Transverse colon (tissue), 4 donors: ENCODE measurements at regions of chr20 and their contacts with region 1.

Region 1: GRCh38 chr20:23350196-23350903 is at the start of gene NXT1:
- DNase-seq: peak; percentile 98
- H3K4me3 ChIP-seq: peak within 1 kb of the TSS; percentile 72 to 98 (median 84)
- H3K27ac ChIP-seq: peak within 1 kb of the TSS; percentile 98 to 100 (median 99)
- H3K4me1 ChIP-seq: peaks cover 16 to 30% (median 18%) of the 10 kb centered on the region in 4 donors
- H3K27me3 ChIP-seq: no peaks in the 10 kb centered on the region
- CTCF ChIP-seq: no peak
- EP300 ChIP-seq: no peak
- POLR2A ChIP-seq: peak; percentile 86
- total RNA-seq, gene NXT1: 16.5 to 43.4 (median 22.8) TPM

Region 2: GRCh38 chr20:21956591-21956990 is 1393.8 kb before region 1 on chr20:
- in situ Hi-C with region 1: no loop called
- intact Hi-C with region 1: no loop called
- DNase-seq: no peak
- H3K4me3 ChIP-seq: no peak overlapping the region
- H3K27ac ChIP-seq: no peak overlapping the region
- H3K4me1 ChIP-seq: no peaks in the 10 kb centered on the region
- H3K27me3 ChIP-seq: no peaks in the 10 kb centered on the region
- CTCF ChIP-seq: no peak
- EP300 ChIP-seq: no peak
- POLR2A ChIP-seq: no peak

Region 3: DNA sequence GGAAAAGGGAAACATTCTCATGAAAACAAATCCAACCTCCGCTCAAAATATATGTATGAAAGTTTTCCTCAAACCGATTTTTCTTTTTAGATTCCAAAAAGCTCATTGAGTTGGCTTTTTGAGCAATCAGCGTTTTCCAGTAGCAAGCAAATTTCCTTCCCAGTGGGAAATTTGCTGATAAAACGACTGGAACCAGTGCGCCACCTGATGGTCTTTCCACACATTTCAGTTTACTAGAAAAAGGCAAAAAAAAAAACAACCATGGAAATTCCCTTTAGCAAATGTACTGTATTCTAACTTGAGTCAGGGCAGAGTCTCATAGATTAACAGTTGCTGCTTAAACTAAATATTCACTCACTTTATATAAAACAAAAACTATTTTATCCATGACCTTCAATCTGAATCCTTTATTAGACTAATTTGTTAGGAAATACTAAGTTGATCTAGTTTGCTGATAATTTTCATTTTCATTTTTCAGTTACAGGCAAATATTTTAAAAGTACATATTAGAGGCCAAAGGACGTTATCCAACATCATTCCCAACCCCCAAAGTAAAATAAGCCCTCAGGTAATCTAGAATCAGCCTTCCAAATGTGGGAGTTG is 1037.5 kb before region 1 on chr20:
- in situ Hi-C with region 1: no loop called
- intact Hi-C with region 1: no loop called
- DNase-seq: no peak
- H3K4me3 ChIP-seq: no peak overlapping the region
- H3K27ac ChIP-seq: no peak overlapping the region
- H3K4me1 ChIP-seq: no peaks in the 10 kb centered on the region
- H3K27me3 ChIP-seq: peaks cover 17% of the 10 kb centered on the region
- CTCF ChIP-seq: peak; percentile 48 to 64 (median 54)
- EP300 ChIP-seq: no peak
- POLR2A ChIP-seq: no peak

Region 4: DNA sequence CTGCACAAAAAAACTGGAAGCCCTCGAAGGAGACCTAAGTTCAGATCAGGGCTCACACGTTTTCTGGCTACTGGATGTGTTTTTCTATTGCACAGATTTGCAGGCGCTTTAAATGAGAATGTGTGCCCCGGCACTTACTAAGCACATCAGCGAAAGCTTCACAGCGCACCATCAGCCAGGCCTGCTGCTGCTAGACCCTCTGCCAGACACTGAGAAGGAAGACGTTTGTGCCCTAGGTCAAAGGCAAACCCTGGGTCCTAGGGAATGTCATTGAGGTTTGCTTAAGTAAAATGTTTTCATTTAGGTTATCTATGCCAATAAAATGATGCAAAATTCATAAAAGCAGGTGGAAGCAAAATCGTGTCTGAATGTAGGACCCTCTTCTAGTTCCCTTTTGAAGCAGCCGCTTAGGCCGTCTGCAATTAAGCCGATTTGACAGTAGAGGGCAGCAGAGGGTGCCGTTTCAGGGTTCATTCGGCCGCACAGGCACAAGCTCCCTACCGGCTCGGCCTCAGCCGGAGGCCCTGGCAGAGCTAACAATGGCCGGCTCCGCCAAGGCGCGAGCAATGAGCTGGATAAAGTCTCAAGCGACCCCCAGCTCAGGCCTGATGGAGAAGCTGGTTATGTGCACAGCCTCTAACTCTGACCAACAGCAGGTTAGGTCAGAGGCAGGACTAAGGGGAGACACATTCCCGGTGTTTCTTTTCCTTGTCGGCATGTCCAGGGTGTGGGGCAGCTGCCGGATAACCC is 658.8 kb before region 1 on chr20:
- in situ Hi-C with region 1: loop called in 1 of 4 experiments (anchors 10 kb)
- intact Hi-C with region 1: no loop called
- DNase-seq: peak; percentile 73
- H3K4me3 ChIP-seq: no peak overlapping the region
- H3K27ac ChIP-seq: no peak overlapping the region
- H3K4me1 ChIP-seq: peaks cover 3 to 5% (median 4%) of the 10 kb centered on the region in 4 donors
- H3K27me3 ChIP-seq: no peaks in the 10 kb centered on the region
- CTCF ChIP-seq: peak; percentile 87 to 89 (median 88)
- EP300 ChIP-seq: no peak
- POLR2A ChIP-seq: no peak

Region 5: DNA sequence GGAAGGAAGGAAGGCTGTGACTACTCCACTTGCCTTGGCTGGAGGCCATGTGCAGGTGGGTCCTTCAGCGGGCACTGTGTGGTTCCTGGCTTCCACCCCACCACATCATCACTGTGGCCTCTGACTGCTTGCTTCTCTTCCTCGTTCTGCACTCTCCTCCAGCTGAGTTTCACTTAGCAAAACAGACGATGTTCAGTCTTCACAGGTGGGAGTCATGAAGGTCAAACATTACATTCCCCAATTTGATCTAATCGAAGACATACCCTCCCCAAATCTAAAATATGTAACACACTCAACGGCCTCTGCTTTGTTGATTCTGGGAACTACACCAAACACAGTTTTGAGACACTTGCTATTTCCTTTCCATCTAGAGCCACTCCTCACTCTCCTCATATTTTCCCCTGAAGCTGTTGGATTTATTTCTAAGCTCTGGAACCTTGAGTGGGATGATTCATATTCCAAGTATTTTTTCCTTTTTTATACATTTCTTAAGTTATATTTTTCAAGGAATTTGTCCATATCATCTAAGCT is 633.5 kb before region 1 on chr20:
- in situ Hi-C with region 1: loop called in 1 of 4 experiments (anchors 25 kb)
- intact Hi-C with region 1: no loop called
- DNase-seq: no peak
- H3K4me3 ChIP-seq: no peak overlapping the region
- H3K27ac ChIP-seq: peak overlapping the region in 1 of 4 donors; percentile 37
- H3K4me1 ChIP-seq: peaks cover 0 to 27% (median 8%) of the 10 kb centered on the region in 4 donors
- H3K27me3 ChIP-seq: no peaks in the 10 kb centered on the region
- CTCF ChIP-seq: no peak
- EP300 ChIP-seq: no peak
- POLR2A ChIP-seq: no peak

Region 6: GRCh38 chr20:23050847-23051631 is 299.3 kb before region 1 on chr20:
- in situ Hi-C with region 1: no loop called
- intact Hi-C with region 1: no loop called
- DNase-seq: peak; percentile 54
- H3K4me3 ChIP-seq: peak overlapping the region in 3 of 4 donors; percentile 7 to 51 (median 33)
- H3K27ac ChIP-seq: peak overlapping the region; percentile 65 to 79 (median 73)
- H3K4me1 ChIP-seq: peaks cover 7 to 36% (median 26%) of the 10 kb centered on the region in 4 donors
- H3K27me3 ChIP-seq: peaks cover 62% of the 10 kb centered on the region
- CTCF ChIP-seq: peak; percentile 35 to 48 (median 45)
- EP300 ChIP-seq: no peak
- POLR2A ChIP-seq: no peak

Region 7: DNA sequence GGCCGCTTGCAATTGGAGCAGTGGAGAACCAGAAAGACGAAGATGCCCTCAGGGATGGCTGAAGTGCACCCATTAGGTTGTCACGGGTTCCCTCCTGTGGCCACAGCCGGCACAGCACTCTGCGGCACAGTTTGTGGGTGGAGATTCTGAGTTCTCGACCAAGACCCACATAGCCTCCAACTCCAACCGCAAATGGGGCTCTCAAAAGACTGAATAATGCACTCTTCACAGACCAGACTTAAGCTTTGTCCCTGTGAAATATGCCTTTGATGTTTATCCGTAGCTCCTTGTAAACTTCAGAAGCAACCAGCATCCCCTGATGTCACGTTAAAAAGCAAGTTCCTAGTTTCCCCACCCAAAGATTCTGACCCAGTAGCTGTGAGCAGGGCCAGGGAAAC is 256.3 kb after region 1 on chr20:
- in situ Hi-C with region 1: loop called in 1 of 4 experiments (anchors 25 kb)
- intact Hi-C with region 1: no loop called
- DNase-seq: peak; percentile 78
- H3K4me3 ChIP-seq: no peak overlapping the region
- H3K27ac ChIP-seq: no peak overlapping the region
- H3K4me1 ChIP-seq: no peaks in the 10 kb centered on the region
- H3K27me3 ChIP-seq: no peaks in the 10 kb centered on the region
- CTCF ChIP-seq: peak; percentile 83 to 89 (median 84)
- EP300 ChIP-seq: no peak
- POLR2A ChIP-seq: no peak

Region 8: GRCh38 chr20:23637282-23638221 is 287.2 kb after region 1 on chr20 and contains the start of gene CST3:
- in situ Hi-C with region 1: no loop called
- intact Hi-C with region 1: loop called (anchors 10 kb)
- DNase-seq: peak; percentile 93
- H3K4me3 ChIP-seq: peak within 1 kb of the TSS; percentile 65 to 93 (median 72)
- H3K27ac ChIP-seq: peak within 1 kb of the TSS; percentile 91 to 99 (median 98)
- H3K4me1 ChIP-seq: peaks cover 5 to 34% (median 22%) of the 10 kb centered on the region in 4 donors
- H3K27me3 ChIP-seq: no peaks in the 10 kb centered on the region
- CTCF ChIP-seq: peak in 1 of 5 experiments; percentile 28
- EP300 ChIP-seq: no peak
- POLR2A ChIP-seq: peak; percentile 92
- total RNA-seq, gene CST3: 607 to 1,755 (median 1,289) TPM

Region 9: DNA sequence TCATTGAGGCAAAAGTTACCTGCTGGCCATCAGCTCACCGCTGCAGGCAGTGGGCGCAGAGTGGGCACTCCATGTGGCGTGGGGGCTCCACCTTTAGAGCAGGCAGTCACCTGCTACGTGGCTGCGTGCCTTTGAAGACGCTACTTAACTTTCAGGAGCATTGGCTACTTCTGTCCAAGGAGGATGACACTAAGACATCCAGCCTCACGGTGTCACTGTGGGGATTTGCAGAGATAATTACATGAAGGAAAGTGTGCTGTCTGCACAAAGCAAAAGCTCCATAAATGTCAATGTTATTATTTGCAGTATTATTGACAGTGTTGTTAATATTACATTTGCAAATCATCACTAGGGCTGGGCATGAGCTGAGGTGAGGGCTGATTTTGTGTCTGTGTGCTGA is 953.0 kb after region 1 on chr20:
- in situ Hi-C with region 1: no loop called
- intact Hi-C with region 1: no loop called
- DNase-seq: no peak
- H3K4me3 ChIP-seq: no peak overlapping the region
- H3K27ac ChIP-seq: no peak overlapping the region
- H3K4me1 ChIP-seq: no peaks in the 10 kb centered on the region
- H3K27me3 ChIP-seq: peaks cover 6% of the 10 kb centered on the region
- CTCF ChIP-seq: no peak
- EP300 ChIP-seq: no peak
- POLR2A ChIP-seq: no peak

Region 10: DNA sequence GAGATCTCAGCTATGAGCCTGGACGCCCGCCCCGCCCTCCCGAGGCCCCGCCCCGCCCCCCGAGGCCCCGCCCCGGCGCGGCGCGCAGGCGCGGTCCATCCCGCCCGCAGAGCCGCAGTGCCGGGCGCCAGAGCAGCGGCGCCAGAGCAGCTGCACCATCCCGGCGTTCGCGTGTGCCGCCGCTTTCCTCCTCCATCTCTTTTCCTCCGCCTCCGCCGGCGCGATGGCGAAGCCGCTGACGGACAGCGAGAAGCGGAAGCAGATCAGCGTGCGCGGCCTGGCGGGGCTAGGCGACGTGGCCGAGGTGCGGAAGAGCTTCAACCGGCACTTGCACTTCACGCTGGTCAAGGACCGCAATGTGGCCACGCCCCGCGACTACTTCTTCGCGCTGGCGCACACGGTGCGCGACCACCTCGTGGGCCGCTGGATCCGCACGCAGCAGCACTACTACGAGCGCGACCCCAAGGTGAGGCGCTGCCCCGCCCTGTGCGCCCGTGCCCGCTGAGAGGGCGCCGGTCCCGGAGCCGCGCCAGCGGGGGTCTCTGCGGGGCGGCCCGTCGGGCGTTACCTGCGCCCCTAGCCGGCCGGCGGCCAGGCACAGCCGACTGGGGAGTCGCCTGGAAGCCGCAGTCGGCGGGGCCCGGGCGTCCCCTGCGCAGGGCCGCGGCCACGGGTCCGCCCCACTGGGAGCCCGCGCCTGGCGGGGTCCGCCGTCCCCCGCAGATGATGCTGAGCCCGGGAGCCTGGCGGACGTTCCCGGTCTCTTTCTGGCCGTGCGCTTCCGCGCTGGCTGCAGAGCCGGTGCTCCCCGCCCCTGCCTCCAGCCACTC is 1897.8 kb after region 1 on chr20 and contains the start of gene PYGB:
- in situ Hi-C with region 1: no loop called
- intact Hi-C with region 1: loop called (anchors 10 kb)
- DNase-seq: peak; percentile 85
- H3K4me3 ChIP-seq: peak within 1 kb of the TSS; percentile 89 to 96 (median 92)
- H3K27ac ChIP-seq: peak within 1 kb of the TSS; percentile 92 to 98 (median 98)
- H3K4me1 ChIP-seq: peaks cover 27 to 64% (median 52%) of the 10 kb centered on the region in 4 donors
- H3K27me3 ChIP-seq: no peaks in the 10 kb centered on the region
- CTCF ChIP-seq: no peak
- EP300 ChIP-seq: no peak
- POLR2A ChIP-seq: peak; percentile 94
- total RNA-seq, gene PYGB: 195 to 554 (median 359) TPM